Gastrocnemius medialis (tissue), 4 donors: ENCODE measurements at regions of chr12 and their contacts with region 1.

Region 1: DNA sequence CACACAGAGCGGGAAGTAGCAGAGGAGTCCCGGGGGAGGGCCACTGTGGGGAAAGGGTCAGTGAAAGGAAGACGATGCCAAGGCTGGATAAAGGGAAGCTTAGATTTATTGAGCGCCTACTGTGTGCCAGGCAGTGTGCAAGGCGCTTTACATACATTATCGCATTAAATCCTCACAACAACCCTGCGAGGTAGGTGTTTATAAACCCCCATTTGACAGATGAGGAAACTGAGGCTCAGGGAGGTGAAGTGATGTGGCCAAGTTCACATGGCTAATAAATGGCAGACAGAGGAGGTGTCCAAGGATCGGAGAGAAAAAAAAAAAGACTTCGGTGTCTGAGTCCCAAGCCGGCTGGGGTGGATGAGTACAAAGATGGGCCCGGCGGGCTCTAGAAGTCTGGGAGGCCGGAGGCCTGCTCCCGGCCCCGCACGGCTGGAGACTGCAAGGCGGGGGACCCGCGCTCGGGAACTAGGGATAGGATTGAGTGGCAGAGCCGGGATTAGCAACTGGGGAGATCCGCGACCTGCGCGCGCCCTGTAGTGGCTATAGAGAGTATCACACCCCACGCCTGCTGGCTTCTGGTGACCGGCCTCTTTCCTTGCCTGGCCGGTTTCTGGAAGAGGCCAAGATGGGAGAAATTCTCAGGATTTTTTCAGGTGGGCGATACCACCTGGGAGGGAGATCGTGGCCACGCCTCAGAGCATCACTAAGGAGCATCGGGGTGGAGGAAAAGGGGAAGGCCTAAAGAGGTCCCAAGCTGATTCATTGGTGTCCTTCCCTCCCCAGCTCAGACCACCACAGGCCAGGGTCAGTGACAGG is 3.9 kb downstream of the DDN start:
- DNase-seq: peak in 1 of 2 donors; percentile 82
- ATAC-seq: peak; percentile 40 to 48
- H3K4me3 ChIP-seq: peak overlapping the region; percentile 28 to 53 (median 46)
- H3K27ac ChIP-seq: peak overlapping the region in 3 of 4 donors; percentile 32 to 83 (median 37)
- H3K4me1 ChIP-seq: peaks cover 26 to 41% of the 10 kb centered on the region in 2 donors
- H3K27me3 ChIP-seq: peaks cover 0 to 43% (median 13%) of the 10 kb centered on the region in 3 donors
- CTCF ChIP-seq: peak; percentile 76 to 92 (median 85)
- POLR2A ChIP-seq: no peak

Region 2: GRCh38 chr12:48851883-48852733 is 143.2 kb before region 1 on chr12 and contains the start of gene DDX23:
- in situ Hi-C with region 1: loop called in 1 of 4 experiments (anchors 25 kb)
- intact Hi-C with region 1: loop called (anchors 1 kb)
- DNase-seq: peak; percentile 93 to 94
- ATAC-seq: peak; percentile 95 to 96
- H3K4me3 ChIP-seq: peak within 1 kb of the TSS; percentile 77 to 100 (median 86)
- H3K27ac ChIP-seq: peak within 1 kb of the TSS; percentile 72 to 89 (median 87)
- H3K4me1 ChIP-seq: peaks cover 17 to 22% of the 10 kb centered on the region in 2 donors
- H3K27me3 ChIP-seq: no peaks in the 10 kb centered on the region
- CTCF ChIP-seq: no peak
- POLR2A ChIP-seq: peak; percentile 22 to 55
- total RNA-seq, gene DDX23: 55.8 to 80.6 (median 75.7) TPM

Region 3: DNA sequence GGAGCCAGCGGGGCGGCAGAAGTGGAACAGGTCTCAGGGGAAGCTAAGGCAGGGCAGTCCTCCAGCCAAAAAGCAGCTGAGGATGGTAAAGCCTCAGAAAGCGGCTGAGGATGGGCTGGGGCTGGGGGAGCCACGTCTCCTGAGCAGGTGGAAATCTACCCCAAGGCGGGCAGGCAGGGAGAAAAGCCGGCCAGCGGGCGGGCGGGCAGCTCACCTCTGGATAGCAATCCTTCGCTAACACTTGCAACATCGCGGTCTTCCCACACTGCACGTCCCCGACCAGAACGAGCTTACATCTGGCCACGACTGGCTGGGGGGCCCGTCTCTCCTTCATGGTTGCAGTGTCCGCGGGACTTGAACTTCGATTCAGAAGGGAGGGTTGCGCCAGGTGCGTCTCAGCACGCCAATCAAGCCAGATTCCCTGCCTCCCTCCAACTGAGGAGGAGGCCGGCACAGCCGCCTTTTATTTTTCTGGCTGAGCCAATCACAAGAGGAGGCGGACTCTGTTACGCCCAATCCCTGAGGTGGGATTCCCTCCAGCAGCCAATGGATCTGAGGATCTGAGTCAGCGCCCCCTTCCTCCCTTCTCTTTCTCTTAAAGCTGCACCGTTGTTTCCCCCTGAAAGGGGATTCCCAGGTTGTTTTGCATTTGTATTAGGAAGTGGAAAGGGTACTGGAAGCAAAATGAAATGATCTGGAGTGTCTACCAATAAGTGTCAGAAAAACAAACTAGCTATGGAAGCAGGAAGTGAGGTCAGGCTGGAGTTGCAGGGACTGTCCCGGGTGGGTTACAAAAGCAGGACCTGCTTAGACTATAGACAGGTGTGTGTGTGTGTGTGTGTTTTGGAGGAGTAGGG is 129.6 kb before region 1 on chr12 and contains the start of gene RND1:
- in situ Hi-C with region 1: loop called in 1 of 4 experiments (anchors 25 kb)
- intact Hi-C with region 1: no loop called
- DNase-seq: peak; percentile 84 to 86
- ATAC-seq: peak; percentile 100
- H3K4me3 ChIP-seq: peak within 1 kb of the TSS; percentile 52 to 87 (median 71)
- H3K27ac ChIP-seq: peak within 1 kb of the TSS in 3 of 4 donors; percentile 33 to 44 (median 39)
- H3K4me1 ChIP-seq: peaks cover 5% of the 10 kb centered on the region in 2 donors
- H3K27me3 ChIP-seq: peaks cover 0 to 10% (median 10%) of the 10 kb centered on the region in 3 donors
- CTCF ChIP-seq: no peak
- POLR2A ChIP-seq: peak; percentile 76 to 94
- total RNA-seq, gene RND1: 0.36 TPM in 1 of 4 donors, not detected in the others

Region 4: DNA sequence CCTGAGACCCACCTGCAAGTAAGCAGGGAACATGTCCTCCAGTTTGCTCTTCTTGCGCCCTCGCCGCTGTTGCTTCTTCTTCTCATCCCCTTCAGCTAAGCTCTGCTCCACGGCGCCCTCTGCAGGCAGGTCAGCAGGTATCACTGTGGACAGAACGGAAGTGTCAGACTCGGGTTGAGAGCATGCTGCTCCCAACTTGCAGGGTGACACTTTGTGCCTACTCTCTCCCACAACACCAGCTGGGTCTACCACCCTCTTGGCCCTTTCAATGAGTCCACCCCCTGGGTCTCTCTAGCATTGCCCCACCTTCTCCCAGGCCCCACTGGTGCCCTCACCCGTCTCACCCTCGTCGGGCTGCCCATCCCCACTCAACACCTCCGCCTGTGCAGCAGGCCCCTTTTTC is 48.6 kb after region 1 on chr12:
- in situ Hi-C with region 1: no loop called
- intact Hi-C with region 1: loop called (anchors 2 kb)
- DNase-seq: peak in 1 of 2 donors; percentile 61
- ATAC-seq: peak in 1 of 2 donors; percentile 80
- H3K4me3 ChIP-seq: no peak overlapping the region
- H3K27ac ChIP-seq: no peak overlapping the region
- H3K4me1 ChIP-seq: no peaks in the 10 kb centered on the region
- H3K27me3 ChIP-seq: no peaks in the 10 kb centered on the region
- CTCF ChIP-seq: peak; percentile 37 to 69 (median 52)
- POLR2A ChIP-seq: no peak